Activated T-helper 2 cell treated with anti-CD3 and anti-CD28 coated beads, Interferon-gamma antibody, Interleukin-2, Interleukin-4, amounts not matched to agents 10 μg/mL and 5 μg/mL and 100 μg/mL, durations not matched to agents 14 hours and 24 hours and 36 hours (primary cell): ENCODE measurements at regions of chr5 and their contacts with region 1.

Region 1: GRCh38 chr5:180860887-180861822 is at the start of gene ZFP62:
- DNase-seq: peak; percentile 83
- H3K4me3 Mint-ChIP-seq: peak within 1 kb of the TSS; percentile 96
- H3K27ac Mint-ChIP-seq: peak within 1 kb of the TSS; percentile 89
- H3K4me1 Mint-ChIP-seq: peaks cover 11% of the 10 kb centered on the region
- H3K27me3 Mint-ChIP-seq: peaks cover 4% of the 10 kb centered on the region
- total RNA-seq, gene ZFP62: 28.2 and 28.8 TPM in 2 replicates

Region 2: DNA sequence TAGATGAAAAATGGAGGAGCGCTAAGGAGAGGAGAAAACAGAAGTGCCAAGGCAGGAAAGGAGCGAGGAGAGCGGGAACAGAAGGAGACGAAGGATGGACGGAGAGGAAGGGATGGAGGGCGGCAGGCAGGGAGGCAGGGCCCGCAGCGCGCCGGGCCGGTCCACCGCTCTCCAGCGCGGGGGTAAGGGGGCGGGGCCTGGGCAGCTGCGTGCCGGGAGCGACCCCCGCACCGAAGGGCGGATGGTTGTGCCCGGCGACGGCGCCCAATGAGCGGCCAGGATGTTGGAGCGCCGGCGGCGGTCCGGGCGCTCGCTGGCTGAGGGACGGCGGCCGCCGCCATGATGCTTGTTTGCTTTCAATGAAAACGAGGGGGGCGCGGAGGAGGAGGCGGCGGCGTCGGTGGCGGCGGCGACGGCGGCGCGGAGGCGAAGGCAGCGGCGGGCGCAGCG is 367.1 kb before region 1 on chr5 and contains the start of gene CNOT6:
- intact Hi-C with region 1: loop called (anchors 5 kb)
- DNase-seq: peak; percentile 92
- H3K4me3 Mint-ChIP-seq: peak within 1 kb of the TSS; percentile 94
- H3K27ac Mint-ChIP-seq: peak within 1 kb of the TSS; percentile 90
- H3K4me1 Mint-ChIP-seq: peaks cover 24% of the 10 kb centered on the region
- H3K27me3 Mint-ChIP-seq: no peaks in the 10 kb centered on the region
- total RNA-seq, gene CNOT6: 43.2 and 48.9 TPM in 2 replicates

Region 3: GRCh38 chr5:180802325-180803180 is 58.6 kb before region 1 on chr5 and contains the start of gene MGAT1:
- intact Hi-C with region 1: loop called (anchors 1 kb)
- DNase-seq: peak; percentile 66
- H3K4me3 Mint-ChIP-seq: peak within 1 kb of the TSS; percentile 92
- H3K27ac Mint-ChIP-seq: peak within 1 kb of the TSS; percentile 91
- H3K4me1 Mint-ChIP-seq: peaks cover 74% of the 10 kb centered on the region
- H3K27me3 Mint-ChIP-seq: no peaks in the 10 kb centered on the region
- total RNA-seq, gene MGAT1: 122 TPM in 2 replicates

Region 4: GRCh38 chr5:180810210-180810958 is 50.8 kb before region 1 on chr5:
- intact Hi-C with region 1: loop called (anchors 1 kb)
- DNase-seq: peak; percentile 92
- H3K4me3 Mint-ChIP-seq: peak overlapping the region; percentile 79
- H3K27ac Mint-ChIP-seq: peak overlapping the region; percentile 99
- H3K4me1 Mint-ChIP-seq: peaks cover 69% of the 10 kb centered on the region
- H3K27me3 Mint-ChIP-seq: no peaks in the 10 kb centered on the region

Region 5: DNA sequence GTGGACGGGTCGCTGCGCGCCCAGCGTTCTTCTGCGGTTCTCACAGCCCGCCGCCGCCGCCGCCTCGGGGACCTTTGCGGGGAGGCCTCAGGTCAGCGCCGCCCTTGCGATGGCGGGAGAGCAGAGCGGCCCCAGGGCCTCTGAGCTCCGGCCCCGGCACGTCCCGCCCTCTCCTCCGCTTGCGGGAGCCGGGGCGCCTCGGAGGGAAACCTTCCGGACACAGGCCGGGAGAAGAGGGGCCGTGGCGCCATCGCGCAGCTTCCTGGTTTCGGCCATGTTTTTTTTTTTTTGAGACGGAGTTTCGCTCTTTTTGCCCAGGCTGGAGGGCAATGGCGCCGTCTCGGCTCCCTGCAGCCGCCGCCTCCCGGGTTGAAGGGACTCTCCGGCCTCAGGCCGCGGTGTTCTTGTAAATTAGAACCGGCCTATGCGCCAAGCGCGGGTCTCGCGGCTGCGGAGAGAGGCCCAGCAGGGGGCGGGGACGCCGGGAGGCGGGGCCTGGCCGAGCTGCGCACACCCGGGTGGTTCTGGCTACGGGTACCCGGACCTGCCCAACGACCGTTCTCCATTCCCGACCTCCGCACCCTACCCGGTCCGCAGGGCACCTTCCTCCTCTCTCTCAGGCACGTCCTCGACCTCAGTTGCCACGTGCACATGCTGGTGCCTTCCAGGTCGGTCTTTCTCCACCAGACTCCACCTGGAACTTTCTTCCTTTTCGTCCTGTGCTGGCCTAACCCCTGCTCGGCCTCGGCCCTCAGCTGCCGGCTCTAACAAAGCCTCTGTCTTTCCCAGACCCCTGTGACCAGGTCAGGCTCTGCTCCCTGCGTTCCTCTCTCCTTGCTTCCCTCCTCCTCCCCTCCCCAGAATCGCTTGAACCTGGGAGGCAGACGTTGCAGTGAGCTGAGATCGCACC is 29.8 kb before region 1 on chr5:
- intact Hi-C with region 1: loop called (anchors 1 kb)
- DNase-seq: peak; percentile 74
- H3K4me3 Mint-ChIP-seq: peak overlapping the region; percentile 88
- H3K27ac Mint-ChIP-seq: peak overlapping the region; percentile 92
- H3K4me1 Mint-ChIP-seq: peaks cover 29% of the 10 kb centered on the region
- H3K27me3 Mint-ChIP-seq: no peaks in the 10 kb centered on the region

Region 6: DNA sequence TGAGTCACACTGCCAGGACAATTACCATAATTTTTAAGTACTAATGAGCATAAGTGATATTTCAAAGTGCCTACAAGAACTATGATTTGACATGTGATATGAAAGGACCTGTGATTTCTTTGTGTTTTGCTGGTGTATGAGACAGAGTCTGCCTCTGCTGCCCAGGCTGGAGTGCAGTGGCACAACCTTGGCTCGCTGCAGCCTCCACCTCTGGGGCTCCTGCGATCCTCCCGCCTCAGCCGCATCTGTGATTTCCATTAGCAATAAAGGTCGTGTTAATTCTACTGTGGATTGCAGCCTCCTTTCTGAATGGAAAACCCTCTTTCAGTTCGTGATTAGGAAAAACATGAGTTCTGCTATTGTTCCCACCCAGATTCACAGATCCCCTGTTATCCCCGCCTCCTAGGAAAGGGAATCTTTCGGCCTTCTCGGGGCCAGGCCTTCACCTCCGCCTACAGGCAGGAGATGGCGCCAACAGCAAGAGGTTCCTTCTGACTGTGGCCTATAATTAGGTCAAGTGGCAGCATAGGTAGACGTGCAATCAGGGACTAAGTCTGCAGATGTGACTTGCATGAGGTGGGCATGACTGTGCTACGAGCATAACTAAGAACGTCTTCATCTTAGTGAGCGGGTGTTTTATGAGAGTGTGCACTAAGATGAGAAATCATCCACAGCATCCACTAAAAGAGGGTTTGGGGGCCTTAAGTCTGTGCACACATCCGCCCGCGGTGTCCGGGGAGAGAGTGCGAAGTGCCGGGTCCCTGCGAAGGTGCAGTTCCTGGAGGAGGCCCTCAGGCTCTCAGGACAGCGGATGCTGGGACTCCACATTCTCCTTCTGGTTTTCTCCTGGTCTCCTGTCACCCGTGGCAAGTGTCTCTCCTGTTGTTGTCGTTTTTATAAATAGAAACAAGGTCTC is 320.8 kb after region 1 on chr5:
- intact Hi-C with region 1: loop called (anchors 10 kb)
- DNase-seq: no peak
- H3K4me3 Mint-ChIP-seq: no peak overlapping the region
- H3K27ac Mint-ChIP-seq: no peak overlapping the region
- H3K4me1 Mint-ChIP-seq: peaks cover 12% of the 10 kb centered on the region
- H3K27me3 Mint-ChIP-seq: peaks cover 6% of the 10 kb centered on the region

Region 7: DNA sequence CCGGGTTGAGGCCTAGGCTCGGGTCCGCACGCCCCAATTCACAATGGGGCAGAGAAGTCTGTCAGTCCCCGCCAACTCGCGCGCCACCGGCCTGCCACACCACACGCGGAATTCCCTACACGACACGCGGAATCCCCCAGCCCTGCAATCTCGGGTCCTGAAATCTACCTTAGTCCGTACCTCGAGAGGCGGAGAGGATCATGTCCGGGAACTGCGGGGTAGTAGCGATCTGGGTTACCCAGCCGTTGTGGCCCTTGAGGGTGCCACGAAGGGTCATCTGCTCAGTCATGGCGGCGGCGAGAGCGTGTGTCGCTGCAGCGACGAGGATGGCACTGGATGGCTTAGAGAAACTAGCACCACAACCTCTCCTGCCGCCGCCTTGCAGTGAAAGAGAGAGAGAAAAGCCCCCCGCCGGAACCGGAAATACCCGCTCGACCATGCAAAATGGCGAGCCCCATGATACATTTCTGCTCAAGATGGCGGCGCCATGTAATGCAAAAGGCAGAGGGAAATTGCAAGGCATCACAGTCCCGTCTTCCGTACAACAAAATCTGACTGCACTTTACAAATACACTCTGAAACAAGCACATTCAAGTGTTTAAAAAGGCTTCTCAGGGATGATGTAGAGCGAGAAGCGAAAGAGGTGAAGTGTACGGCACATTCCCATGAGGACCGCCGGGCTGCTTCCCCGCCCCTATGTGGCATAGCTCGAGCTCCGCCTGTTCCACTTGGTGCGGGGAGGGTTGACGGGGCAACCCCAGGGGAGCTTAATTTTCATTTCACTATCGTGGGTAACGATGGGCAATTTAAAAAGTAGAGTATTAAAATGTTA is 382.6 kb after region 1 on chr5 and contains the start of gene RACK1:
- intact Hi-C with region 1: loop called (anchors 5 kb)
- DNase-seq: peak; percentile 85
- H3K4me3 Mint-ChIP-seq: peak within 1 kb of the TSS; percentile 98
- H3K27ac Mint-ChIP-seq: peak within 1 kb of the TSS; percentile 99
- H3K4me1 Mint-ChIP-seq: peaks cover 39% of the 10 kb centered on the region
- H3K27me3 Mint-ChIP-seq: no peaks in the 10 kb centered on the region
- total RNA-seq, gene RACK1: 2,110 and 2,123 TPM in 2 replicates